Caco-2 (cell line): ENCODE measurements at regions of chr13 and their contacts with region 1.

Region 1: GRCh38 chr13:22801402-22802003 is 379.3 kb upstream of the SGCG start:
- DNase-seq: no peak
- H3K4me3 ChIP-seq: no peak overlapping the region
- H3K4me3 Mint-ChIP-seq: no peak overlapping the region
- H3K27ac Mint-ChIP-seq: no peak overlapping the region
- H3K4me1 ChIP-seq: no peaks in the 10 kb centered on the region
- H3K4me1 Mint-ChIP-seq: no peaks in the 10 kb centered on the region
- H3K27me3 ChIP-seq: no peaks in the 10 kb centered on the region
- H3K27me3 Mint-ChIP-seq: peaks cover 2% of the 10 kb centered on the region
- CTCF ChIP-seq: peak; percentile 22 to 39

Region 2: GRCh38 chr13:23020223-23020843 is 218.8 kb after region 1 on chr13:
- CTCF ChIA-PET with region 1: interaction called, 12 read pairs
- POLR2A ChIA-PET with region 1: no interaction called
- intact Hi-C with region 1: loop called (anchors 1 kb)
- DNase-seq: peak; percentile 56 to 58
- H3K4me3 ChIP-seq: no peak overlapping the region
- H3K4me3 Mint-ChIP-seq: no peak overlapping the region
- H3K27ac Mint-ChIP-seq: no peak overlapping the region
- H3K4me1 ChIP-seq: no peaks in the 10 kb centered on the region
- H3K4me1 Mint-ChIP-seq: no peaks in the 10 kb centered on the region
- H3K27me3 ChIP-seq: no peaks in the 10 kb centered on the region; the same call in 1 of the 2 replicates
- H3K27me3 Mint-ChIP-seq: no peaks in the 10 kb centered on the region
- CTCF ChIP-seq: peak; percentile 82 to 87

Region 3: GRCh38 chr13:23175920-23176319 is 374.4 kb after region 1 on chr13:
- CTCF ChIA-PET with region 1: interaction called, 4 read pairs
- POLR2A ChIA-PET with region 1: no interaction called
- intact Hi-C with region 1: loop called (anchors 1 kb)
- DNase-seq: no peak
- H3K4me3 ChIP-seq: no peak overlapping the region
- H3K4me3 Mint-ChIP-seq: no peak overlapping the region
- H3K27ac Mint-ChIP-seq: no peak overlapping the region
- H3K4me1 ChIP-seq: no peaks in the 10 kb centered on the region
- H3K4me1 Mint-ChIP-seq: no peaks in the 10 kb centered on the region
- H3K27me3 ChIP-seq: no peaks in the 10 kb centered on the region
- H3K27me3 Mint-ChIP-seq: peaks cover 6% of the 10 kb centered on the region
- CTCF ChIP-seq: peak; percentile 18 to 27

Region 4: DNA sequence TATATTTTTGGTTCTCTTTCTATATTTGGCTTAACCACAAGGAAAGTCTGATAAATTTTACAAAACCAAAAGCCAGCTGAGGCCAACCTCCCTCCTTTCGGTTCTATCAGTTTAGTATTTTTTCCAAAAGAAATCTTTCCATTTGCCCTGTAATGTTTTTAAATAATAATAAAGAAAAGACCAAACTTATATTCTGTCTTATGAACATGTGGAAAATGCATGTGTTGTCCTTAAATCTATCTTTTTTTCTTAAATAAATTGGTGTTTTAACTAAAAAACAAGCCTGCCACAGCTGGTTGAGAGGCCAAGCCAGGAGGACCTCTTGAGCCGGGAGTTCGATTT is 518.4 kb after region 1 on chr13:
- CTCF ChIA-PET with region 1: interaction called, 3 read pairs
- POLR2A ChIA-PET with region 1: no interaction called
- intact Hi-C with region 1: loop called (anchors 1 kb)
- DNase-seq: no peak
- H3K4me3 ChIP-seq: no peak overlapping the region
- H3K4me3 Mint-ChIP-seq: no peak overlapping the region
- H3K27ac Mint-ChIP-seq: no peak overlapping the region
- H3K4me1 ChIP-seq: no peaks in the 10 kb centered on the region; the same call in 1 of the 2 replicates
- H3K4me1 Mint-ChIP-seq: peaks cover 8% of the 10 kb centered on the region
- H3K27me3 ChIP-seq: peaks cover 2% of the 10 kb centered on the region; the same call in 1 of the 2 replicates
- H3K27me3 Mint-ChIP-seq: peaks cover 2% of the 10 kb centered on the region
- CTCF ChIP-seq: no peak

Region 5: GRCh38 chr13:23488458-23488857 is 687.0 kb after region 1 on chr13:
- CTCF ChIA-PET with region 1: no interaction called
- POLR2A ChIA-PET with region 1: no interaction called
- intact Hi-C with region 1: no loop called
- DNase-seq: no peak
- H3K4me3 ChIP-seq: no peak overlapping the region
- H3K4me3 Mint-ChIP-seq: no peak overlapping the region
- H3K27ac Mint-ChIP-seq: no peak overlapping the region
- H3K4me1 ChIP-seq: no peaks in the 10 kb centered on the region
- H3K4me1 Mint-ChIP-seq: no peaks in the 10 kb centered on the region
- H3K27me3 ChIP-seq: no peaks in the 10 kb centered on the region
- H3K27me3 Mint-ChIP-seq: no peaks in the 10 kb centered on the region
- CTCF ChIP-seq: no peak